Dorsolateral prefrontal cortex (tissue), 120 donors: ENCODE measurements at regions of chr17 and their contacts with region 1.

Region 1: DNA sequence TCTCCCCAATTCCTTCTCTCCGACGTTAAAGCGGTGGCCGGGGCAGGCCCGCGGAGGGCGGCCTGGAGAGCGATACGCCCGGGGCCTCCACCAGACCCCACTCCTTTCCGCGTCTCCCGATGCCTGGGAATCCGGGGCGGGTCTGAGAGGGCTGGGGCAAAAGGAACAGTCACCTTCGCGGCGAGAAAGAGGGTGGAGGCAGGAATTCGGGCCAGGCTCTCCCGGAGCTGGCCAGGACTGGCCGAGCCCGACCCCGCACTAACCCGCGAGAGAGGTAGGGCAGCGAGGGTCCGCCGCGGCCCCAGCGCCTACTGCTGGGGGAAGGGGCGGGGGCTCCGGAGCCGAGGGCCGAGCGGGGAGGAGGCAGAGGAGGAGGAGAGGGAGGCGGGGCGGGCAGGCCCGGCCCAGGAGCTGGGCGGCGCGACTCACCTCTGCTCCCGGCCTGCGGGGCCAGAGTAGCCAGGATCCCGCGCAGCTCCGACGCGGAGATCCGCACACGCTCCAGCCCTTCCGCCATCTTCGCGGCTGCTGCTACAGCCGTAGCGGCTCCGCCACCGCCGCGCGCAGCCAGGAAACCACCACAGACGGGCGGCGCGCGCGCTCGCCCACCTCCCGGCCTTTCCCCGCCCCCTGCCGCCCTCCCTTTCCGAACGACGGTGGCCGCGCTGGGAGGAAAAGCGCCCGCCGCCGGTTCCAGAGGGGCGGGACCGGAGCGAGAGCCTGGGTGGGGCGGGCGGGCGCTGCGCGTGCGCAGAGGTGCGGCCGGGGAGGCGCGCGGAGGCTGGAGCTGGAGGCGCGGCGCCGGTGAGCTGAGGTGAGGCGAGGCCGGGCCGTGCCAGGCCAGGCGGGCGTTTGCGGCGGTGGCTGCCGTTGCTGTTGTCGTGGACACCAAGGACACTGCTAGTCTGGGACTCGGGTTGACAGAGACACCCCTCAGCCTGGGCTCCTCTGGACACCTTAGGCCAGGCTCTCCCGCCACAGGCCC is at the starts of genes SMG6 and SRR:
- DNase-seq: peak; percentile 72 to 92 (median 86)
- H3K4me3 ChIP-seq: peak within 1 kb of the TSS; percentile 67 to 100 (median 95)
- H3K27ac ChIP-seq: peak within 1 kb of the TSS; percentile 60 to 96 (median 88)
- H3K27me3 ChIP-seq: no peaks in the 10 kb centered on the region
- CTCF ChIP-seq: peak in 33 of 56 donors; percentile 7 to 66 (median 32)
- total RNA-seq, gene SMG6: 34.8 to 81.1 (median 50.5) TPM
- total RNA-seq, gene SRR: 5.3 to 28.7 (median 16.8) TPM

Region 2: GRCh38 chr17:2292100-2292499 is 11.4 kb before region 1 on chr17:
- intact Hi-C with region 1: no loop called
- DNase-seq: no peak
- H3K4me3 ChIP-seq: no peak overlapping the region
- H3K27ac ChIP-seq: no peak overlapping the region
- H3K27me3 ChIP-seq: no peaks in the 10 kb centered on the region
- CTCF ChIP-seq: no peak

Region 3: GRCh38 chr17:2336215-2336851 is 32.8 kb after region 1 on chr17 and contains the start of gene TSR1:
- intact Hi-C with region 1: loop called (anchors 2 to 5 kb)
- DNase-seq: peak; percentile 89 to 97 (median 93)
- H3K4me3 ChIP-seq: peak within 1 kb of the TSS; percentile 61 to 100 (median 88)
- H3K27ac ChIP-seq: peak within 1 kb of the TSS; percentile 36 to 95 (median 87)
- H3K27me3 ChIP-seq: no peaks in the 10 kb centered on the region
- CTCF ChIP-seq: peak in 54 of 56 donors; percentile 16 to 76 (median 60)
- total RNA-seq, gene TSR1: 16.4 to 33.3 (median 23.0) TPM

Region 4: GRCh38 chr17:2392252-2393173 is 89.0 kb after region 1 on chr17:
- intact Hi-C with region 1: loop called in 1 of 2 experiments (anchors 2 kb)
- DNase-seq: peak; percentile 89 to 98 (median 96)
- H3K4me3 ChIP-seq: peak overlapping the region; percentile 45 to 96 (median 83)
- H3K27ac ChIP-seq: peak overlapping the region; percentile 66 to 100 (median 97)
- H3K27me3 ChIP-seq: no peaks in the 10 kb centered on the region
- CTCF ChIP-seq: peak in 15 of 56 donors; percentile 3 to 31 (median 16)